CD8-positive, alpha-beta memory T cell (primary cell): ENCODE measurements at regions of chr7 and their contacts with region 1.

Region 1: DNA sequence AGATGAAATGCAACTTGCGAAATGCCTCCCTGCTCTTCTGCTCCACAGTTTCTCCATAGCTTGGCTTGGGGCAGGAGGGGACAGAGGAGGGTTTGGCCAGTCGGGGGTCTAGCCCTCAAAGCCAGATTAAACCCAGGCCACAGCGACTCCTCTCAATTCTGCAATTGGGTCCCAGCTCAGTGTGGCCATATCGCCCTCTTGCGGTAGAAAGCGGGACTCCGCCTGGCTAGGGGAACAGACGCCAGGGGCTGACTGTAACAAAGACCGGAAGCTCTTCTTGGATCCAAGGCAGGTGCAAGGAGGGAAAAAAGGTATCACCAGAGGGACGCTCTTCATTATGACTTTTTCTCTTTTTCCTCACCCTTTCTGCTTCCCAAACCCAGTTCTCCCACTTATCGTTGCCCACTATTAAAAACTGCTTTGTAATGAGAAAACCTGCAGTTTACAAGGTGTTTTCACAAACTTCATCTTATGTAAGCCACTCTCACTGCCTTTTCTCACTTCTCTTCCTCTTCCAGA is 36.6 kb upstream of the TNPO3 start:
- DNase-seq: peak; percentile 66 to 87 (median 76)
- H3K4me3 ChIP-seq: no peak overlapping the region
- H3K4me3 Mint-ChIP-seq: no peak overlapping the region
- H3K27ac ChIP-seq: no peak overlapping the region
- H3K27ac Mint-ChIP-seq: peak overlapping the region in 4 of 8 donors; percentile 31 to 90 (median 58)
- H3K4me1 ChIP-seq: peaks cover 13% of the 10 kb centered on the region
- H3K4me1 Mint-ChIP-seq: peaks cover 11 to 18% (median 15%) of the 10 kb centered on the region in 3 donors
- H3K27me3 ChIP-seq: no peaks in the 10 kb centered on the region
- H3K27me3 Mint-ChIP-seq: peaks cover 3% of the 10 kb centered on the region in 2 donors

Region 2: DNA sequence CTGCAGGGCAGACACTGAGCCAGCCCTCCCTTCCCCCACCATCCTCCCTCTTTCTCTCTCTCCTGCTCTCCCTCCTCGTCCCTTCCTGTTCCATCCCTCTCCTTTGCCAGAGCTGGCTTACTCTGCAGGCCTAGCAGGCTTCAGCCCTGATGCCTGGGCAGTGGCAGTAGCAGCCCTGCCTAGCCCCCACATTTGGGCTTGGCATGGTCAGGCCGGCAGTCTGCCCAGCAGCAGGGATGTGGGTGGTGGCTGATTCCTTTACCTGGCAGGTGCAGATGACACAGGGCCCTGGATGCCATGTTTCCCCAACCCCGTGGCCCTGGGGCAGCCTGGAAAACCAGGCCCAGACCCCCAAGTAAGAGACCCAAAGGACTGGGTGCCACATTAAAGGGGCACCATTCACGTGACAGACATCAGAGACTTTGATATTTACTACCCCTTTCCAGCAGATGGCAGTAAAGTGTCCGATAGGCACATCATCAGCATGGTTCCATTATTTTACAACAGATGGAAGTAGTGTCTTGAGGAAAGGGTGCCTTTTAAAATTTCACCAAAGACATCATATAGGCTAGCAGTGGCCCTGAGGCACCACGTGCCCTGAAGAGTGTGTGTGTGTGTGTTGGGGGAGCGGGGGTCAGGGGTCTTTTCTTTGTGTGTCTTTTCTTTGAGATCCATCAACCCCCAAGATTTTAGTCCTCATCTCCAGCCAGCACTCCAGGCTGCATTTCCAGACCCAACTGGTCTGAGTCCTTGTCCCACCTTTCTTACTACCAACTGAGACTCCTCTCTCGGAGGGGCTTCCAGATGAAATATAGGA is 187.0 kb before region 1 on chr7:
- CTCF ChIA-PET with region 1: interaction called, 17 read pairs
- POLR2A ChIA-PET with region 1: no interaction called
- DNase-seq: peak in 3 of 5 donors; percentile 45 to 59 (median 55)
- H3K4me3 ChIP-seq: no peak overlapping the region
- H3K4me3 Mint-ChIP-seq: no peak overlapping the region
- H3K27ac ChIP-seq: no peak overlapping the region
- H3K27ac Mint-ChIP-seq: no peak overlapping the region
- H3K4me1 ChIP-seq: no peaks in the 10 kb centered on the region
- H3K4me1 Mint-ChIP-seq: no peaks in the 10 kb centered on the region
- H3K27me3 ChIP-seq: no peaks in the 10 kb centered on the region
- H3K27me3 Mint-ChIP-seq: peaks cover 16 to 47% of the 10 kb centered on the region in 2 donors

Region 3: GRCh38 chr7:129101746-129102145 is 10.2 kb after region 1 on chr7:
- CTCF ChIA-PET with region 1: interaction called, 11 read pairs
- POLR2A ChIA-PET with region 1: no interaction called
- DNase-seq: no peak
- H3K4me3 ChIP-seq: no peak overlapping the region
- H3K4me3 Mint-ChIP-seq: no peak overlapping the region
- H3K27ac ChIP-seq: no peak overlapping the region
- H3K27ac Mint-ChIP-seq: no peak overlapping the region
- H3K4me1 ChIP-seq: no peaks in the 10 kb centered on the region
- H3K4me1 Mint-ChIP-seq: no peaks in the 10 kb centered on the region
- H3K27me3 ChIP-seq: no peaks in the 10 kb centered on the region
- H3K27me3 Mint-ChIP-seq: peaks cover 0 to 4% of the 10 kb centered on the region in 2 donors